ENCODE measurements at regions of chr10 and their contacts with region 1.

Region 1: DNA sequence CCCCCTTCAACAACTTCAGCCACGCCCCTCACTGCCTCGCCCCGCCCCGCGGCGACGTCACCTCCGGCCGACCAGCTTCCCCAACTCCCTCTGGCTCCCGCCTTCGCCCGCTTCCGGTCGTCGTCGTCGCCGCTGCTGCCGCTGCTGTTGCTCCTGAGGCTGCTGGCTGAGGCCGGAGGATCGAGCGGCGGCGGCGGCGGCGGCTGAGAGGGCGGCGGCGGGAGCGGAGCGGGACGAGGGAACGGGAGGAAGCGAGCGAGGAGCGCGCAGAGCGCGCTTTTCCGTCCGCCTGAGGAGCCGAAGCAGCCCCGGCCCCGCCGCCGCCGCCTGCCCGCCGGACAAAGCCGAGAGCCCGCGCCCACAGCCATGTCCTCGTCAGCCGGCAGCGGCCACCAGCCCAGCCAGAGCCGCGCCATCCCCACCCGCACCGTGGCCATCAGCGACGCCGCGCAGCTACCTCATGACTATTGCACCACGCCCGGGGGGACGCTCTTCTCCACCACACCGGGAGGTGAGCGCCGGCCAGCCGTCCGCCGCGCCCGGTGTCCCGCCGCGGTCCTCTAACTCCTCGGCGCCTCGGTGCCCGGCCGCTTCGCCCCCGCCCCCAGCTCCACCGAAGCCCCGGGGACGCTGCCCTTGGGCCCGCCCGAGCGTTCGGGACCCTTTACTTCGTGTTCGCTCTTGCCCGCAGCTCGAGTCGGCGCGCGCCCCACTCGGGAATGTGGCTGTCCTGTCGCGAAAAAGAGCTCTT is at the start of gene EIF4EBP2:
- DNase-seq: peak; percentile 100
- ATAC-seq: peak; percentile 98
- H3K4me3 Mint-ChIP-seq: peak within 1 kb of the TSS; percentile 92
- H3K27ac Mint-ChIP-seq: peak within 1 kb of the TSS; percentile 80
- H3K4me1 Mint-ChIP-seq: peaks cover 32% of the 10 kb centered on the region
- H3K27me3 Mint-ChIP-seq: no peaks in the 10 kb centered on the region
- CTCF ChIP-seq: no peak
- total RNA-seq, gene EIF4EBP2: 38.7 and 40.6 TPM in 2 replicates

Region 2: GRCh38 chr10:70169649-70170364 is 234.4 kb before region 1 on chr10:
- CTCF ChIA-PET with region 1: no interaction called
- POLR2A ChIA-PET with region 1: interaction called, 7 read pairs
- intact Hi-C with region 1: loop called (anchors 1 kb)
- DNase-seq: no peak
- ATAC-seq: peak; percentile 29
- H3K4me3 Mint-ChIP-seq: peak overlapping the region; percentile 94
- H3K27ac Mint-ChIP-seq: peak overlapping the region; percentile 93
- H3K4me1 Mint-ChIP-seq: peaks cover 43% of the 10 kb centered on the region
- H3K27me3 Mint-ChIP-seq: no peaks in the 10 kb centered on the region
- CTCF ChIP-seq: no peak

Region 3: GRCh38 chr10:70381471-70382421 is 22.5 kb before region 1 on chr10:
- CTCF ChIA-PET with region 1: interaction called, 5 read pairs
- POLR2A ChIA-PET with region 1: interaction called, 5 read pairs
- intact Hi-C with region 1: loop called (anchors 1 kb)
- DNase-seq: peak; percentile 32
- ATAC-seq: no peak
- H3K4me3 Mint-ChIP-seq: peak overlapping the region; percentile 86
- H3K27ac Mint-ChIP-seq: no peak overlapping the region
- H3K4me1 Mint-ChIP-seq: peaks cover 11% of the 10 kb centered on the region
- H3K27me3 Mint-ChIP-seq: peaks cover 2% of the 10 kb centered on the region
- CTCF ChIP-seq: no peak

Region 4: GRCh38 chr10:70493660-70494234 is 89.5 kb after region 1 on chr10:
- CTCF ChIA-PET with region 1: no interaction called
- POLR2A ChIA-PET with region 1: interaction called, 3 read pairs
- intact Hi-C with region 1: loop called (anchors 5 kb)
- DNase-seq: peak; percentile 55
- ATAC-seq: peak; percentile 74
- H3K4me3 Mint-ChIP-seq: peak overlapping the region; percentile 71
- H3K27ac Mint-ChIP-seq: peak overlapping the region; percentile 91
- H3K4me1 Mint-ChIP-seq: peaks cover 77% of the 10 kb centered on the region
- H3K27me3 Mint-ChIP-seq: no peaks in the 10 kb centered on the region
- CTCF ChIP-seq: no peak

Region 5: DNA sequence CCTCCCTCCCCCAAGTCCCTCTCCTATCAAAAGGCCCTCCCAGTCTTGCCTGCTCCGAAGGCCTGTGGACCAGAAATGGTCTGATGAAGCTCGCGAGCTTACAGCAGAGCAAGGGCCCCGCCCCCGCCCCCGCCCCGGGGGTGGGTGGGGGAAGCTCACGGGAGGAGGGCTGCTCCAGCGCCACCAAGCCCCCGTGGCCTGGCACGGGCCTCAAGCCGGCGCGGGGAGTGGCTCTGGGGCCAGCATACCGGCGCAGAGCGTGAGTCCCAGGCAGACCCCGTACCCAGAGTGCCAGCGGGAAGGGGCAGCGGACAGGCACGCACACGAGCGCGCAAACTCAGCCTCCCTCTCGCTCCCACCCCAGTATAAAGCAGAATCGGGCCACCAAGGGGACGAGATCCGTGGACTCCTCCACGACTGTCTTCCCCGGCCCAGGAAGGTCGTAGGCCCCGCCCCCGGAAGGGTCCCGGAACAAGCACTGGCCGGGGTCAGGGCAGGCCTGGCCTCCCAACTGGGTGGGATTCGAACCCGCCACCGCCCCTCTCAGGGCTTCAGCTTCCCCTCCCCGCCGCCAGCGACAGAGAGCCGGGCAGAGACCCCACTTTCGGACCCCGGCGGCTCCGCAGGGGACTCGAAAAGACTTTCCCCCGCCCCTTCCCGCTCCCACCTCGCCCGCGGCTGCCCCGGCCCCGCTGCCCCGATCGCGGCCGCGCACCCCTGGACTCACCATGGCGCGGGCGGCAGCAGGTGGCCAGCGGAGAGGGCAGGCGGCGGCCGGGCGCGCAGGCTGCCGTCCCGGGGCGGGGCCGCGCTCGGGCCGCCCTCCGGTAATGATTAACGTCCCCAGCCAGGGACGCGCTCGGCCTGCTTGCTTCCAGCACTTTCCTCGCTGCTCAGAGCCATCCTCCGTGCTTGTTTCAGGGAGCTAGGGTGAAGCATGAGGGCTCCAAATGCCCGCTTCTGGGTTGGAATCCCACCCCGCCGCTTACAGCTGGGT is 483.9 kb after region 1 on chr10 and contains the start of gene PCBD1:
- CTCF ChIA-PET with region 1: no interaction called
- POLR2A ChIA-PET with region 1: no interaction called
- intact Hi-C with region 1: loop called (anchors 1 kb)
- DNase-seq: peak; percentile 73
- ATAC-seq: peak; percentile 92
- H3K4me3 Mint-ChIP-seq: peak within 1 kb of the TSS; percentile 84
- H3K27ac Mint-ChIP-seq: peak within 1 kb of the TSS; percentile 76
- H3K4me1 Mint-ChIP-seq: peaks cover 8% of the 10 kb centered on the region
- H3K27me3 Mint-ChIP-seq: no peaks in the 10 kb centered on the region
- CTCF ChIP-seq: no peak
- total RNA-seq, gene PCBD1: 37.3 and 41.4 TPM in 2 replicates

Measured in activated B cell treated with CpG ODN at 0.5 μM for 24 hours (primary cell).